HCT116 (cell line): ENCODE measurements at regions of chr15 and their contacts with region 1.

Region 1: DNA sequence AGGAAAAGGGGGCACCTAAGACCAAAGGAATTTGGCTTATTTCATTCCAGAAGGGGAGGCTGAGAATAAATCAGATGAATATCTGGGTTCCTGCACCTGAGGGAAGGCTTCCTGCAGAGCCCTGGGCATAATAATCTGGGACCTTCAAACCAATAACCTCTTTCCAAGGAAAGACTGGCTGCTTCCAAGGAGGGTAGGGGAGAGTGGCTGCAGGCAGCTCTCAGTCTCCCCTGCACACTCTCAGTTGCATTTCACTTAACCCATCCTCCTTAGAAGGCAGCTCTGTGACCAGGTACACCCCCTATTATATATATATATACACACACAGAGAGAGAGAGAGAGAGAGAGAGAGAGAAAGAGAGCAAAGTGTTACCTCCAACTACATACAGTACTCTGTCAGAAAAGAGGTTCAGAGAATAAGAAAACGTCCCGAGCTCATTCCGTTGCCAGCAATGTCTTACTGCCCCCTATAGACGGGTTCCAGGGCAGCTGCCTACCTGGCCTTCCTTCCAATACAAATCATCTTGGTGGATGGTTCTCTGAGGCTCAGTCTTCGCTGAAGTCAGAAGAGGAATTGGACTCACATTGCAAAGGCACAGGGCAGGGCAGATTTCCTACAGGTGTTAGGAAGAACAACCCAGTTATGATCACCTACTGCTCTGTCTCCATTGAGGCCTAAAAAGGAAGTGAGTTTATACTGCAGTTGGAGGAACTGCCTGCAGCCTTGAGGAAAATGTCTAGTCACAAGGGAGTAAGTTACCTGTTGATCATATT is 26.1 kb downstream of the CAPN3 start:
- DNase-seq: peak; percentile 35
- ATAC-seq: peak; percentile 95
- H3K4me3 ChIP-seq: no peak overlapping the region
- H3K27ac ChIP-seq: no peak overlapping the region
- H3K4me1 ChIP-seq: no peaks in the 10 kb centered on the region
- H3K27me3 ChIP-seq: no peaks in the 10 kb centered on the region
- CTCF ChIP-seq: peak; percentile 46 to 92 (median 89); a peak in 5 of 6 replicates
- POLR2A ChIP-seq: no peak
- RAD21 ChIP-seq: peak; percentile 76

Region 2: GRCh38 chr15:42267286-42267685 is 118.1 kb before region 1 on chr15:
- CTCF ChIA-PET with region 1: no interaction called
- POLR2A ChIA-PET with region 1: no interaction called
- RAD21 ChIA-PET with region 1: no interaction called
- intact Hi-C with region 1: no loop called
- DNase-seq: no peak
- ATAC-seq: no peak
- H3K4me3 ChIP-seq: no peak overlapping the region
- H3K27ac ChIP-seq: no peak overlapping the region
- H3K4me1 ChIP-seq: peaks cover 4 to 5% of the 10 kb centered on the region in 2 experiments; a peak in 3 of 4 replicates
- H3K27me3 ChIP-seq: no peaks in the 10 kb centered on the region
- CTCF ChIP-seq: no peak
- POLR2A ChIP-seq: no peak
- RAD21 ChIP-seq: no peak

Region 3: GRCh38 chr15:42401544-42402454 is 16.4 kb after region 1 on chr15:
- CTCF ChIA-PET with region 1: interaction called, 11 read pairs
- POLR2A ChIA-PET with region 1: interaction called, 5 read pairs
- RAD21 ChIA-PET with region 1: no interaction called
- intact Hi-C with region 1: no loop called
- DNase-seq: peak; percentile 72
- ATAC-seq: peak; percentile 98
- H3K4me3 ChIP-seq: peak overlapping the region; percentile 81 to 92
- H3K27ac ChIP-seq: peak overlapping the region; percentile 60
- H3K4me1 ChIP-seq: peaks cover 0 to 18% of the 10 kb centered on the region in 2 experiments; a peak in 2 of 4 replicates
- H3K27me3 ChIP-seq: no peaks in the 10 kb centered on the region
- CTCF ChIP-seq: no peak
- POLR2A ChIP-seq: peak; percentile 77
- RAD21 ChIP-seq: no peak

Region 4: DNA sequence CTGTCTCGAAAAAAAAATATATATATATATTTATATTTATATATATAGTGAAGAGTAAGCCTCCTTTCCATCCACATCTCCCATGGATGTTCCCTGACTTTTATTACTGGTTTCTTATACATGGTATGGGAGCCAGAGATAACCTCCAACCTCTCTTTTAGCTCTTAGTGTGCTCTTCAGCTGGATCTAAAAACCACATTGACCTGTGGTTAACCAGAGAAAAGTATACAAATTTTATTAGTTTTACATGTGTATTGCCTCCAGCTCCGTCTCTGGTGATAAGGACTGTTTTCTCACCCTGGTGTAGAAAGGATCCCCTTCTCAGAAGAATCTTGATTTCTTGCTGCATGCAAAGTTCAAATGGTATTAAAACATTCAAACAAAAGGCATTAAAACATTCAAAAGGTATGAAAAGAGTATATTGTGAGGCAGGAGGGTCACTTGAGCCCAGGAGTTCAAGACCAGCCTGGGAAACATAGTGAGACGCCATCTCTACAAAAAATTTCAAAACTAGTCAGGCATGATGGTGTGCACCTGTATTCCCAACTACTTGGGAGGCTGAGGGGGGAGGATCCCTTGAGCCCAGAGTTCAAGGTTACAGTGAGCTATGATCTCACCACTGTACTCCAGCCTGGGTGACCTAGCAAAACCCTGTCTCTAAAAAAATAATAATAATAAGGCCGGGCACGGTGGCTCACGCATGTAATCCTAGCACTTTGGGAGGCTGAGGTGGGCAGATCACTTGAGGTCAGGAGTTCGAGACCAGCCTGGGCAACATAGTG is 548.7 kb after region 1 on chr15:
- CTCF ChIA-PET with region 1: no interaction called
- POLR2A ChIA-PET with region 1: no interaction called
- RAD21 ChIA-PET with region 1: no interaction called
- intact Hi-C with region 1: no loop called
- DNase-seq: no peak
- ATAC-seq: no peak
- H3K4me3 ChIP-seq: no peak overlapping the region
- H3K27ac ChIP-seq: no peak overlapping the region
- H3K4me1 ChIP-seq: no peaks in the 10 kb centered on the region
- H3K27me3 ChIP-seq: no peaks in the 10 kb centered on the region
- CTCF ChIP-seq: no peak
- POLR2A ChIP-seq: no peak
- RAD21 ChIP-seq: no peak